IMR-90 (cell line): ENCODE measurements at regions of chr20 and their contacts with region 1.

Region 1: GRCh38 chr20:45905505-45906079 is 6.4 kb downstream of the PLTP start:
- DNase-seq: peak; percentile 90
- ATAC-seq: peak; percentile 64
- H3K4me3 ChIP-seq: no peak overlapping the region
- H3K27ac ChIP-seq: no peak overlapping the region
- H3K4me1 ChIP-seq: peaks cover 3% of the 10 kb centered on the region
- H3K27me3 ChIP-seq: no peaks in the 10 kb centered on the region
- CTCF ChIP-seq: no peak
- POLR2A ChIP-seq: no peak
- RAD21 ChIP-seq: no peak

Region 2: GRCh38 chr20:45890985-45891983 is 14.3 kb before region 1 on chr20 and contains the starts of genes CTSA and NEURL2:
- CTCF ChIA-PET with region 1: interaction called, 8 read pairs
- POLR2A ChIA-PET with region 1: interaction called, 10 read pairs
- dilution Hi-C with region 1: no loop called
- in situ Hi-C with region 1: no loop called
- intact Hi-C with region 1: no loop called
- DNase-seq: peak; percentile 92
- ATAC-seq: peak; percentile 73
- H3K4me3 ChIP-seq: peak within 1 kb of the TSS; percentile 74
- H3K27ac ChIP-seq: peak within 1 kb of the TSS; percentile 63
- H3K4me1 ChIP-seq: peaks cover 3% of the 10 kb centered on the region; the same call in 1 of the 2 replicates
- H3K27me3 ChIP-seq: no peaks in the 10 kb centered on the region
- CTCF ChIP-seq: no peak
- POLR2A ChIP-seq: no peak; the same call in none of the 2 replicates
- RAD21 ChIP-seq: no peak
- total RNA-seq, gene CTSA: 19.0 and 30.3 TPM in 2 replicates
- total RNA-seq, gene NEURL2: 0.56 and 1.1 TPM in 2 replicates

Region 3: GRCh38 chr20:46057856-46058598 is 152.4 kb after region 1 on chr20:
- CTCF ChIA-PET with region 1: no interaction called
- POLR2A ChIA-PET with region 1: no interaction called
- dilution Hi-C with region 1: no loop called
- in situ Hi-C with region 1: no loop called
- intact Hi-C with region 1: no loop called
- DNase-seq: peak; percentile 47
- ATAC-seq: peak; percentile 71
- H3K4me3 ChIP-seq: peak overlapping the region; percentile 21; the same call in 1 of the 2 replicates
- H3K27ac ChIP-seq: no peak overlapping the region
- H3K4me1 ChIP-seq: no peaks in the 10 kb centered on the region; the same call in 1 of the 2 replicates
- H3K27me3 ChIP-seq: peaks cover 8% of the 10 kb centered on the region; the same call in 1 of the 2 replicates
- CTCF ChIP-seq: peak; percentile 23
- POLR2A ChIP-seq: no peak
- RAD21 ChIP-seq: peak; percentile 10; the same call in 1 of the 2 replicates

Region 4: GRCh38 chr20:46446851-46447250 is 541.3 kb after region 1 on chr20:
- CTCF ChIA-PET with region 1: no interaction called
- POLR2A ChIA-PET with region 1: no interaction called
- dilution Hi-C with region 1: no loop called
- in situ Hi-C with region 1: no loop called
- intact Hi-C with region 1: no loop called
- DNase-seq: no peak
- ATAC-seq: no peak
- H3K4me3 ChIP-seq: no peak overlapping the region
- H3K27ac ChIP-seq: no peak overlapping the region
- H3K4me1 ChIP-seq: no peaks in the 10 kb centered on the region
- H3K27me3 ChIP-seq: peaks cover 5% of the 10 kb centered on the region
- CTCF ChIP-seq: no peak
- POLR2A ChIP-seq: no peak
- RAD21 ChIP-seq: no peak